ENCODE measurements at regions of chr15 and their contacts with region 1.

Region 1: GRCh38 chr15:45166834-45167630 is 20.7 kb downstream of the SHF start:
- DNase-seq: peak; percentile 32
- H3K4me3 ChIP-seq: peak overlapping the region; percentile 61
- H3K27me3 ChIP-seq: no peaks in the 10 kb centered on the region
- CTCF ChIP-seq: peak; percentile 76

Region 2: DNA sequence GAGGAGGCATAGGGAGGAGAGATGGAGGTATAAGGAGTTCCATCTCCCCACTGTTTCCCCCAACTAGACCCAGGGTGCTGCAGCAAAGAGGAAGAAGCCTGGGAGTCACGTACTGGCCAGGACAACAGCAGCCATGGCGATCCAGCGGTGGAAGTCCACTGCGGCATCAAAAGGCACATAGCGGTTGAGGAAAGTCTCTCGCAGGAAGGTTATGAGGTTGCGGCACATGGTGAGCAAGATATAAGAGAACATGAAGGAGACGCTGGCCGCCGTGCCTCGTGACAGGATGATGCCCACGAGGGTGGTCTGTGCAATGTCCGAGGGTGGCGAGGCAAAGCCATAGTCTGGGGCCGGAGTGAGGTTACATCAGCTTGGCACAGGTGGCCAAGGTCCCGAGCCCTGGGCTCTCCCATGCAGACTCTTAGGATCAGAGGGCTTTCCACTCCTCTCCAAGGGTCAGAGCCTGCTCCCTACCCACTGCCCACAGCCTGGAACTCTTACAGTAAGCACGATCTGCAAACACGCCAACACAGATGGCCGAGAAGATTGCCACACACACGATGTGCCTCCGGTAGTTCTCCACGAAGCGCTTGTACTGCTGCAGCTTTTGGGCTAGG is 67.4 kb before region 1 on chr15:
- CTCF ChIA-PET with region 1: no interaction called
- POLR2A ChIA-PET with region 1: no interaction called
- DNase-seq: no peak
- H3K4me3 ChIP-seq: no peak overlapping the region
- H3K27me3 ChIP-seq: peaks cover 6% of the 10 kb centered on the region
- CTCF ChIP-seq: no peak

Region 3: DNA sequence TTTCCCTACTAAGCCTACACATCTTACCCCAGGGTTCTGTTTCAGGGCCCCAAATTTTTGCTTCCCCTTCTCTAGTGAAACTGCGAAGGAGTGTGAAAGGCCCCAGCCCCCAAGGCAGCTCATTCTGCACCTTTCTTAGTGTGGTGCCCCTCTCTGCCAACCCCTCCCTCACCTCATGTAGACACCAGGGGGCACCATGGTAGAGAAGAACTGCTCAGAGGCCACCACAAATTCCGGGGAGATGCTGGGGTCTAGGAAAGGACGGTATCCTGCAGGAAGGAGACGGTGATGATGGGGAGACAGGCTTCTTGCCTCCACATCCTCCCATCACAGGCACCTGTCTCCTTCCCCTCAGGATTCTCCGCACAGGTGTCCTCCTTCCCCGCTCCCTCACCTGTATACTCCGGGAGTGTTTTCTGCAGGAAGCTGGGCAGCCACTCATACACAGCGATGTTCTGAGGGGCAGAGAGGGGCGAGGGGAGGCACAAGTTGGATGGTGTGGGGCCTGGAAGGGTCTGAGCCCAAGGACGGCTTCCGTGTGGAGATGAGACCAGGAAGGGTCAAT is 56.7 kb before region 1 on chr15:
- CTCF ChIA-PET with region 1: no interaction called
- POLR2A ChIA-PET with region 1: no interaction called
- DNase-seq: no peak
- H3K4me3 ChIP-seq: no peak overlapping the region
- H3K27me3 ChIP-seq: peaks cover 45% of the 10 kb centered on the region
- CTCF ChIP-seq: 0 out of 2 replicates have a peak, but pooled peaks have one; percentile 3

Region 4: GRCh38 chr15:45179221-45179985 is 12.4 kb after region 1 on chr15:
- CTCF ChIA-PET with region 1: interaction called, 47 read pairs
- POLR2A ChIA-PET with region 1: no interaction called
- DNase-seq: no peak
- H3K4me3 ChIP-seq: no peak overlapping the region
- H3K27me3 ChIP-seq: no peaks in the 10 kb centered on the region
- CTCF ChIP-seq: peak; percentile 48

Region 5: DNA sequence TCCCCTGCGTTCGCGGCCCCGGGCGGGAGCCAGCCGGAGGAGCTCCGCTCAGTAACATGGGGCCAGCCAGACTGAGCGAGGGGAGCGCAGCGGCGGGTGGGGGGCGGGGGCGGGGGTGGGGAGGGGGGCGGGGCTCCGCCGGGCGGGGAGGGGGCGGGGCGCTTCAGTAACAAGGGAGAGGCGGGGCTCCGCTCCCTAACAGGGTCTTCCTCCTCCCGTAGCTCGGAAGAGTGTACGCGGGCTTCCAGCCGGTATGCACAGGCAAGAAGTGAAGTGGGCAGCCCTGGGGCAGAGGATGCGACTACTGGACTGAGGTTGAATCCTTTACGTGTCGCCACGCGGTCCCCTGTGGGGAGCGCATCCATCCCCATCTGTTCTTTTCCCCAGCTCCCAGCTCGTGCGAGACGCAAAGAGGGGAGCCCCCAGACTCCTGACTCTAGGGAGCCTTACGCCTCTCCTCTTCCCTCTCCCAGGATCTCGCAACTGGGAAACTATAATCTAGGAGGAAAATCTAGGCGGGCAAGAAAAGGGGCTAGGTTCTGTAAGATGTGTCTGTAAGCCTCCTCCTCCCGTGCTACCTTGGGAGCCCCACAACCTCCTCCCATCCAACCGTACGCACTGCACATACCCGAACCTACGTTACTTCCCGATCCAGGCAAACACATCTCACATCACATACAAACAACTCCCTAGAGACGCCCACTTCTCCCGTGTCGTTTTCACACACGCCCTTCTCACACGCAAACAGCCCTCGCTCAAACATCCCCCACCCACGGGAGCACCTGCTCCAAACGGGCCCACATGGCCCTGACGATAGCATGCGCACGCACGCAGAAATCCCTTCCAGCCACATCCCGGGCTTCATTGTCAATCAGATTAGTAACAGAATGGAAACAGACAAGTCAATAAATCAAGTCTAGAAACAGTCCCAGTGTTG is 21.1 kb after region 1 on chr15 and contains the start of gene SHF:
- CTCF ChIA-PET with region 1: interaction called, 22 read pairs
- POLR2A ChIA-PET with region 1: no interaction called
- DNase-seq: no peak
- H3K4me3 ChIP-seq: peak within 1 kb of the TSS; percentile 67
- H3K27me3 ChIP-seq: no peaks in the 10 kb centered on the region; the same call in 1 of the 2 replicates
- CTCF ChIP-seq: no peak
- polyA plus RNA-seq, gene SHF: 3.9 and 5.2 TPM in 2 replicates

Region 6: DNA sequence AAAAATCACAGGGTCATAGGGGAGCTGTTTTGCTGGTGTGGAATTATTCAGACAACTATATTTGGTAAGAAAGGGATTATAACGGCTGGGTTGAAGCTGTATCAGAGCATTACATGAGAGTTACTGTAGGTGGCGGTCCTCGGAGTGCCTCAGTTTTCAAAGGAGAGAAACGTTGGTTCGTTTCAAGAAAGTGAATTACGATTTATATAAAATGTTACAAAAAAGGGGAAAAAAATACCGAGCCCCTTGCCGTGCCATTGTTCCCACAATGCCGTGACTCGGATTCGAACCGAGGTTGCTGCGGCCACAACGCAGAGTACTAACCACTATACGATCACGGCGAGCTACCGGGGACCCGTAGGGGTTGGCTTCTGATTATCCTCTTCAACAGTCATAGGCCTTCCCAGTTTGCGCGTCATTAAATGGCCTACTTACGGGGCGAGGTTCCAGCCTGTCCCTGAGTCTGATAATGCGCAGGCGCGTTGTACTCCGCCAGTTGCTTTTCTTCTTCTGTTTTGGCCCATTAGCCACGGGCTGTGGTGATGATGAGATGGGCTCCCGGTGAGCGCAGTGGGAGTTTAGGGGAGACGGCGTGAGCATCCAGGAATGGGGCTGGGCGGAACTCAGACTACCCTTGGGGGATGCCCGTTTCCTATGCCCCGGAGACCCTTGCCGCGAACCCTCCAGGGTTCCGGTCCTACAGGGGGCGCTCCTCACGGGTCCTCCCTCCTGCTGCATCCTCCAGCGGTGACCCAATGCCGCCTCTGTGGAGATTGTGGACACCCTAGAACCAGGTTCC is 31.5 kb after region 1 on chr15:
- CTCF ChIA-PET with region 1: interaction called, 18 read pairs
- POLR2A ChIA-PET with region 1: no interaction called
- DNase-seq: peak; percentile 92
- H3K4me3 ChIP-seq: peak overlapping the region; percentile 62
- H3K27me3 ChIP-seq: no peaks in the 10 kb centered on the region; the same call in none of the 2 replicates
- CTCF ChIP-seq: peak; percentile 89

Region 7: DNA sequence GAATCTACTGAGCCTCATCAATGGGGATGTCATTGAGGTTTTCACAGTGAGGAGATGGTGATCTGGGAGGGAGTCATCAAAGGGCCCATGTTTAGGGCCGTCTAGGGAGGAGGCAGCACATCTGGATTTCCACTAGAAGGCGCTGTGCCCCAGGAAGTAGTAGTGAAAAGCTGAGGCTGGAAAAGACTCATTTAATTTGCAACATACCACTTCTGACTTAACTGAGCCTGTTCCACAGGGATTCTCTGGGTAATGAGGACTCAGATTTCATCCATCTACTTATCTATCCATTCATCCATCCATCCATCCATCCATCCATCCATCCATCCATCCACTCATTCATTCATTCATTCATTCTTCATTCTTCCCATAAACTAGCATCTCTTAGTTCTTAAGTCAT is 38.2 kb after region 1 on chr15:
- CTCF ChIA-PET with region 1: interaction called, 38 read pairs
- POLR2A ChIA-PET with region 1: interaction called, 6 read pairs
- DNase-seq: no peak
- H3K4me3 ChIP-seq: no peak overlapping the region
- H3K27me3 ChIP-seq: peaks cover 3% of the 10 kb centered on the region
- CTCF ChIP-seq: peak; percentile 84

Region 8: GRCh38 chr15:45253330-45253729 is 86.3 kb after region 1 on chr15:
- CTCF ChIA-PET with region 1: no interaction called
- POLR2A ChIA-PET with region 1: no interaction called
- DNase-seq: no peak
- H3K4me3 ChIP-seq: no peak overlapping the region
- H3K27me3 ChIP-seq: no peaks in the 10 kb centered on the region
- CTCF ChIP-seq: no peak

Region 9: DNA sequence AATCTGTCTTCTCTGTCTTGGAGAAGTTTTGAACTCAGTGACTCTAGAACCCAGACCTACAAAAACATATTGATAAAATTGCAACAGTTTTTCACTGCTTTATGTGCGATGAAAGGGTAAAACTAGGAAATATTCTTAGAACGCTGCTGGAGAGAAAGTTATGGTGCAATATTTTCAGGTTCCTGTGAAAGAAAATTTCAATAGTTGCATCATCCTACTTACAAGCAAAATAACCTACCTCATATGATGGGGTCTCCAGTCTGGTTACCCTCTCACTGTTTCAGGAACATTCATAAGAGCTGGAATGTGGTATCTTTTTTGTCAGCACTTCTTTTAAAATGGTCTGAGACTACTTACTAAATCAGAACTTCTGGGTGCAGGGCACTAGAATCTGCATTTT is 184.2 kb after region 1 on chr15:
- CTCF ChIA-PET with region 1: no interaction called
- POLR2A ChIA-PET with region 1: no interaction called
- DNase-seq: no peak
- H3K4me3 ChIP-seq: no peak overlapping the region
- H3K27me3 ChIP-seq: no peaks in the 10 kb centered on the region
- CTCF ChIP-seq: no peak

Region 10: DNA sequence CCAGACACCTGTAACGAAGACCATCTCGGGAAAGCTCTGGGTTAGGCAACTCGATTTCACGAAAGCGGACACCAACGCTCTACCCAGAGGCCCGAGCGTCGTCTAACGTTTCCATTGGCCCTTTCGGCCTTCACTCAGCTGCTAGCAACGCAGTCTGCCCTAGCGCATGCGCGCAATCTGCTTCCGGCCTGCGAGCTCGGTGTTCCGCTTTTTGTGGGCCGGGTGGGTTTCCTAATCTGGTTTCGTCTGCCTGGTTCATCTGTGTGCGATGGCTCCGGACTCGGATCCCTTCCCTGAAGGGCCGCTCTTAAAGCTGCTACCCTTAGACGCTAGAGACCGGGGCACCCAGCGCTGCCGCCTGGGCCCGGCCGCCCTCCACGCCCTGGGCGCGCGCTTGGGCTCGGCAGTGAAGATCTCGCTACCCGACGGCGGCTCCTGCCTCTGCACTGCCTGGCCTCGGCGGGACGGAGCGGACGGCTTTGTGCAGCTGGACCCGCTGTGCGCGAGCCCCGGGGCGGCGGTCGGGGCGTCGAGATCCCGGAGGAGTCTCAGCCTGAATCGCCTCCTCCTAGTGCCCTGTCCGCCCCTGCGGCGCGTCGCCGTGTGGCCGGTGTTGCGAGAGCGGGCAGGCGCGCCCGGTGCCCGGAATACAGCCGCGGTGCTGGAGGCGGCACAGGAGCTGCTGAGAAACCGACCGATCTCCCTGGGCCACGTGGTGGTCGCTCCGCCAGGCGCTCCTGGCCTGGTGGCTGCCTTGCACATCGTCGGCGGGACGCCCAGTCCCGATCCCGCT is 235.3 kb after region 1 on chr15:
- CTCF ChIA-PET with region 1: interaction called, 70 read pairs
- POLR2A ChIA-PET with region 1: no interaction called
- DNase-seq: peak; percentile 91
- H3K4me3 ChIP-seq: peak overlapping the region; percentile 98
- H3K27me3 ChIP-seq: peaks cover 4% of the 10 kb centered on the region
- CTCF ChIP-seq: no peak

Measured in BJ (cell line).